ENCODE measurements at regions of chr14 and their contacts with region 1.

Region 1: DNA sequence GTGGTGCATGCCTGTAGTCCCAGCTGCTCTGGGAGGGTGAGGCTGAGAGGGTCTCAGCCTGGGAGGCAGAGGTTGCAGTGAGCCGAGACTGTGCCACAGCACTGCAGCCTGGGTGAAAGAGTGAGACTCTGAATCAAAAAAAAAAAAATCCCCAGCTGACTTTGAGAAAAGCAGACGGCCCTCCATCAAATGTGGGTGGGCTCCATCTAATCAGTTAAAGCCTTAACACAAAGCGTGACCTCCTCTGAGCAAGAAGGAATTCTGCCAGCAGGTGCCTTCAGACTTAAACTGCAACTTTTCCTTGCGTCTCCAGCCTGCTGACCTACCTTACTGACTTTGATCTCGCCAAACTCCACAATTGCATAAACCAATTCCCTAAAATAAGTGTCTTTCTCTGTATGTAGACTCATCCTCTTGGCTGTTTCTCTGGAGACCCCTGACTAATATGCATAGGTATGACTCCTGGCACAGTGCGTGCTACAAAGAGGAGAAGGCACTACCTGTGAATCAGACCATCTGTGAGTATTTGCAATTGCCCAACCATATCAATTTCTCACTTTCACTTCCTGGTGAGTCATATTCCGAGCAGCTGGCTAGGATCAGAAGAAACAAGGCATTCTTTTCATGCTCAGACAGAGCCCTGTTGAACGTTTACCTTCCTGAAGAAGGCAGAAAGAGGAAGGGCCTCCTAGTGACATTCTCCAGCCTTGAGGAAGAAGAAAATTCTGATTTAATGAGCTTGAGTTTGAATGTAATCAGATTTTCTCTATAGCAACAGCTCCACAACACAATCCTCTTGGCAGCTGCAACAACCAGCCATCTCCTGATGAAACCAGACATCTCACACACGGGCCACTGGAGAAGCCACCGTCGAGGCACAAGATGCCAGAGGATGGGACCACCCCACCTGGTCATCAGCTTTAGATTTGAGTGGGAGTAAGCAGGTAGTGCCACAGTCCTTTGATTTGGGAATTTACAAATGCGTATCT is 54.3 kb downstream of the CLMN start:
- DNase-seq: peak; percentile 100
- H3K4me3 ChIP-seq: peak overlapping the region in 2 of 3 experiments; percentile 18 to 21
- H3K27ac ChIP-seq: peak overlapping the region; percentile 100
- H3K4me1 ChIP-seq: peaks cover 64% of the 10 kb centered on the region
- H3K27me3 ChIP-seq: no peaks in the 10 kb centered on the region
- CTCF ChIP-seq: no peak

Region 2: GRCh38 chr14:95157327-95158189 is 107.8 kb before region 1 on chr14 and contains the start of gene DICER1:
- CTCF ChIA-PET with region 1: no interaction called
- dilution Hi-C with region 1: no loop called
- in situ Hi-C with region 1: no loop called
- intact Hi-C with region 1: loop called (anchors 5 kb)
- DNase-seq: peak; percentile 91
- H3K4me3 ChIP-seq: peak within 1 kb of the TSS; percentile 68 to 75 (median 75)
- H3K27ac ChIP-seq: peak within 1 kb of the TSS; percentile 84
- H3K4me1 ChIP-seq: peaks cover 12% of the 10 kb centered on the region
- H3K27me3 ChIP-seq: no peaks in the 10 kb centered on the region
- CTCF ChIP-seq: no peak
- total RNA-seq, gene DICER1: 48.4 to 56.0 TPM

Region 3: DNA sequence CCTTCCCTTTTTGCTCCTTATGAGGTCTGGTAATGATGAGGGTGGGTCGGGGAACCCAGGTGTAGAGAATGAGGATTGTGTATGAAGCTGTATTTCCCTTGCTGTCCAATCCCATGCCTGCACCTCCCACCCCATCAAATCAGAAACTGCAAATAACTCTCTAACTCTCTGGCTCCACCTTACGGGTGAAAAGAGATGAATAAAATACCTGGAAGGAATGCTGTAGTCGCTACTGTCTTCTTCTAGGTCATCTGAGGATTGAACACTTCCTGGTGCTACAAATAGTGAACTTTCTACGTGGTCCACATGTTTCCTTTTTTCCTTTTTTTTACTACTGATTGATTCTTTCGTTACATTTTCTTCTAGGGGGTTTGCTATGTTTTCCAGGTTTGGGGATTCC is 69.1 kb before region 1 on chr14:
- CTCF ChIA-PET with region 1: no interaction called
- dilution Hi-C with region 1: no loop called
- in situ Hi-C with region 1: no loop called
- intact Hi-C with region 1: no loop called
- DNase-seq: no peak
- H3K4me3 ChIP-seq: no peak overlapping the region
- H3K27ac ChIP-seq: no peak overlapping the region
- H3K4me1 ChIP-seq: no peaks in the 10 kb centered on the region
- H3K27me3 ChIP-seq: no peaks in the 10 kb centered on the region
- CTCF ChIP-seq: no peak

Region 4: DNA sequence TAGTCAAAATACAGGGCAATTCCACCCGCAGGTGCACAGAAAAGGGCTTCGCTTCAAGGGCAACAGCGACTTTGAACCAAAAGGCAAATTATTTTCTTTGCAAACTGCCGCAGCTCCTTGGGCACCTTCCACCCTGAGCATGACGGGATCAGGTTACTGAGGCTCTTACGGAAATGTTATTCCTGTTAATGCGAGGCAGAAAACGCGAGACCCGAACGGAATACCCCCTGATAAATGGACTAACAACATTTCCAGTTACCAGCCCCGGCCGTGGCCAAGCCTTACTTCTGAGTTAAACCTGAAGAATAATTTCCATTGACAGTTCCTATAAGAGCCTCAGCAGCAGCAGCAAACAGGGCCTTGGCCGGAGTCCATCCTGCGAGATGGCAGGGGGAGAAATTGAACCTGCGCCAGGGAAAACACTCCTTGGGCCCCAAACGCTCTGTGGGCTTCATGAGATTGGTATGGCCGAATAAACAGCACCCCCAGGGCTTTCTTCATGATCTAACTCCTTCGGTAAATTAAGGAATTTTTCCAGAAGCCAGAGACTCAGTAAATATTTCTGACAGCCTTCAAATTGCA is 38.0 kb before region 1 on chr14:
- CTCF ChIA-PET with region 1: no interaction called
- dilution Hi-C with region 1: no loop called
- in situ Hi-C with region 1: no loop called
- intact Hi-C with region 1: no loop called
- DNase-seq: no peak
- H3K4me3 ChIP-seq: no peak overlapping the region
- H3K27ac ChIP-seq: no peak overlapping the region
- H3K4me1 ChIP-seq: peaks cover 3% of the 10 kb centered on the region
- H3K27me3 ChIP-seq: no peaks in the 10 kb centered on the region
- CTCF ChIP-seq: no peak

Region 5: GRCh38 chr14:95291859-95292542 is 26.6 kb after region 1 on chr14:
- CTCF ChIA-PET with region 1: no interaction called
- dilution Hi-C with region 1: no loop called
- in situ Hi-C with region 1: no loop called
- intact Hi-C with region 1: loop called (anchors 1 kb)
- DNase-seq: peak; percentile 75
- H3K4me3 ChIP-seq: no peak overlapping the region
- H3K27ac ChIP-seq: peak overlapping the region; percentile 67
- H3K4me1 ChIP-seq: peaks cover 46% of the 10 kb centered on the region
- H3K27me3 ChIP-seq: no peaks in the 10 kb centered on the region
- CTCF ChIP-seq: no peak

Region 6: GRCh38 chr14:95319312-95320021 is 54.1 kb after region 1 on chr14 and contains the start of gene CLMN:
- CTCF ChIA-PET with region 1: no interaction called
- dilution Hi-C with region 1: no loop called
- in situ Hi-C with region 1: loop called in 1 of 2 experiments (anchors 10 kb)
- intact Hi-C with region 1: loop called (anchors 1 kb)
- DNase-seq: peak; percentile 52
- H3K4me3 ChIP-seq: peak within 1 kb of the TSS; percentile 78 to 85 (median 82)
- H3K27ac ChIP-seq: peak within 1 kb of the TSS; percentile 58
- H3K4me1 ChIP-seq: peaks cover 65% of the 10 kb centered on the region
- H3K27me3 ChIP-seq: no peaks in the 10 kb centered on the region
- CTCF ChIP-seq: no peak
- total RNA-seq, gene CLMN: 12.2 to 64.3 TPM

Region 7: GRCh38 chr14:95346820-95347219 is 81.4 kb after region 1 on chr14:
- CTCF ChIA-PET with region 1: no interaction called
- dilution Hi-C with region 1: no loop called
- in situ Hi-C with region 1: no loop called
- intact Hi-C with region 1: no loop called
- DNase-seq: no peak
- H3K4me3 ChIP-seq: no peak overlapping the region
- H3K27ac ChIP-seq: no peak overlapping the region
- H3K4me1 ChIP-seq: no peaks in the 10 kb centered on the region
- H3K27me3 ChIP-seq: no peaks in the 10 kb centered on the region
- CTCF ChIP-seq: no peak

Region 8: GRCh38 chr14:95361373-95362137 is 96.2 kb after region 1 on chr14:
- CTCF ChIA-PET with region 1: no interaction called
- dilution Hi-C with region 1: no loop called
- in situ Hi-C with region 1: no loop called
- intact Hi-C with region 1: loop called (anchors 10 kb)
- DNase-seq: peak; percentile 51
- H3K4me3 ChIP-seq: peak overlapping the region in 2 of 3 experiments; percentile 10 to 13
- H3K27ac ChIP-seq: no peak overlapping the region
- H3K4me1 ChIP-seq: peaks cover 16% of the 10 kb centered on the region
- H3K27me3 ChIP-seq: no peaks in the 10 kb centered on the region
- CTCF ChIP-seq: peak; percentile 74 to 81

Region 9: GRCh38 chr14:95515596-95516552 is 250.5 kb after region 1 on chr14:
- CTCF ChIA-PET with region 1: no interaction called
- dilution Hi-C with region 1: no loop called
- in situ Hi-C with region 1: loop called in 1 of 2 experiments (anchors 25 kb)
- intact Hi-C with region 1: no loop called
- DNase-seq: peak; percentile 62
- H3K4me3 ChIP-seq: peak overlapping the region; percentile 53 to 58 (median 56)
- H3K27ac ChIP-seq: peak overlapping the region; percentile 28
- H3K4me1 ChIP-seq: peaks cover 45% of the 10 kb centered on the region
- H3K27me3 ChIP-seq: no peaks in the 10 kb centered on the region
- CTCF ChIP-seq: peak in 1 of 2 donors; percentile 30

Region 10: DNA sequence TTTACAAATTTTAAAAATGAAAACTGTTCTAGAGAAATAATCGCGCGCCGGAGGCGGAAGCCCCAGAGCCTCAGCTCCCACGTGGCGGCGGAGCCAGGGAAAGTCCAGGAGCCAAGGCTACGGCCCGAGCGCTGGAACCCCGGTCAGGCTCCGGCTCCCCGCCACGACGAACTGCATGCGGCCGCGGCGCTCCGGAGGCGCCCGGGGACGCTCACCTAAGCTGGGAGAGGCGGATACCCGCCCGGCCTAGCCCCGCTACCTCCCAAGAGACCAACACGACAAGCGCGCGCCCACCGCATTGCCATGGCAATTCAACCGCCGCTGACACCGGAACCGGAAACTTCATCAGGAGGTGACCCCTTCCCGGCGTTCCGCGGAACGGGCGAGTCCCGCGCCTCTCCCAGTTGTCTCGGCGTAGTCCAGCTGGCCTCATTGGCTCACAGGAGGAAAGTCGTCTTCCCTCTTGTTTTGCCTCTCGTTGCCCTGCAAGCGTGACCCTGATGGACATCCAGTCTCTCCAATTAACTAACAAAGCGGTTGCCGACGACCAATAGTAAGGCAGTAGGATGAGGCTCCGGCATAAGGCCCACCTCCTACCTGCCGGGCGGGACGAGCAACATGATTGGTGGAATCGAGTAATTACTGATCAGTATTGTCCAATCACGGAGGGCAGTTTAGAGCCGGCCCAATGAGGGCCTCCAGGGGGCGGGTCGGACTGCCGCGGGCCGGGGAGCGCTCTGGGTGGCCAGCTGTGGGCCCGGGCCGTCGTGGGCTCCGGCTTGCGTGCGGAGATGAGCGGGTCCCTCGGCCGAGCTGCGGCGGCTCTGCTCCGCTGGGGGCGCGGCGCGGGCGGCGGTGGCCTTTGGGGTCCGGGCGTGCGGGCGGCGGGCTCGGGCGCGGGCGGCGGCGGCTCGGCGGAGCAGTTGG is 269.2 kb after region 1 on chr14 and contains the start of gene GLRX5:
- CTCF ChIA-PET with region 1: no interaction called
- dilution Hi-C with region 1: no loop called
- in situ Hi-C with region 1: no loop called
- intact Hi-C with region 1: loop called (anchors 5 kb)
- DNase-seq: peak; percentile 100
- H3K4me3 ChIP-seq: peak within 1 kb of the TSS; percentile 87 to 93 (median 91)
- H3K27ac ChIP-seq: peak within 1 kb of the TSS; percentile 82
- H3K4me1 ChIP-seq: peaks cover 40% of the 10 kb centered on the region
- H3K27me3 ChIP-seq: no peaks in the 10 kb centered on the region
- CTCF ChIP-seq: no peak
- total RNA-seq, gene GLRX5: 21.2 to 34.6 TPM

Measured in mammary epithelial cell (primary cell).